Dendritic cell treated with granulocyte-macrophage colony-stimulating factor and Interleukin-4, amounts not matched to agents 40 ng/mL and 50 ng/mL, for 4 days (primary cell): ENCODE measurements at regions of chr21 and their contacts with region 1.

Region 1: DNA sequence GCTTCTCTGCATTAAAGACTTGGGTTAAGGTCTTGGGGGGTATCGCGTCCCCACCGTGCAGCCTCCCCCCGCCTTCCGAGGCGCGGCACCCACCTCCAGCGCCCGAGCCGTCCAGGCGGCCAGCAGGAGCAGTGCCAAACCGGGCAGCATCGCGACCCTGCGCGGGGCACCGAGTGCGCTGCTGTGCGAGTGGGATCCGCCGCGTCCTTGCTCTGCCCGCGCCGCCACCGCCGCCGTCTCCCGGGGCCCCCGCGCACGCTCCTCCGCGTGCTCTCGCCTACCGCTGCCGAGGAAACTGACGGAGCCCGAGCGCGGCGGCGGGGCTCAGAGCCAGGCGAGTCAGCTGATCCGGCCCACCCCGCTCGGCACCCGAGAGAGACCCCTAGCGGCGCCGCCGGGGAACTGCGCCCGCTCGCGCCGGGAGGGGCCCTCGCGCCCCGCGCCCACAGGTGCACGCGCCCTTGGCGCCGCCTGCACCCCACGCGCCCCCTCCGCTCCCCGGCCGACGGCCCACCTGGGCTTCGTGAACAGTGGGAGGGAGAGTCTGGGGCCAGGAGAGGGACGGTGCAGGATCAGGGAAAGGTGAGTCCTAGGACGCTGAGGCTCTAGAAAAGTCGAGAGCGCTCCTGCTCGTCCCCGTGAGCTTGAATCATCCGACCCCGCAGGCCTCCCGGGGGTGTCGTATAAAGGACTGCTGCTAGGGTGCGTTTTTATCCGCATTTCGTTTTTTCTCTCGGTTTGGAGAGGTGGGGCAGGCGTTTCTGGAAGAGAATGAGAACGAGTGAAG is at the start of gene APP:
- H3K4me3 Mint-ChIP-seq: peak within 1 kb of the TSS; percentile 92
- H3K27ac Mint-ChIP-seq: peak within 1 kb of the TSS; percentile 86
- H3K4me1 Mint-ChIP-seq: peaks cover 42% of the 10 kb centered on the region
- H3K27me3 Mint-ChIP-seq: peaks cover 14% of the 10 kb centered on the region

Region 2: GRCh38 chr21:25734904-25735645 is 435.6 kb before region 1 on chr21 and contains the starts of genes ATP5PF and GABPA:
- intact Hi-C with region 1: loop called (anchors 10 kb)
- H3K4me3 Mint-ChIP-seq: peak within 1 kb of the TSS; percentile 96
- H3K27ac Mint-ChIP-seq: peak within 1 kb of the TSS; percentile 100
- H3K4me1 Mint-ChIP-seq: peaks cover 35% of the 10 kb centered on the region
- H3K27me3 Mint-ChIP-seq: no peaks in the 10 kb centered on the region

Region 3: GRCh38 chr21:25871566-25871965 is 299.1 kb before region 1 on chr21:
- intact Hi-C with region 1: no loop called
- H3K4me3 Mint-ChIP-seq: no peak overlapping the region
- H3K27ac Mint-ChIP-seq: no peak overlapping the region
- H3K4me1 Mint-ChIP-seq: peaks cover 8% of the 10 kb centered on the region
- H3K27me3 Mint-ChIP-seq: no peaks in the 10 kb centered on the region

Region 4: DNA sequence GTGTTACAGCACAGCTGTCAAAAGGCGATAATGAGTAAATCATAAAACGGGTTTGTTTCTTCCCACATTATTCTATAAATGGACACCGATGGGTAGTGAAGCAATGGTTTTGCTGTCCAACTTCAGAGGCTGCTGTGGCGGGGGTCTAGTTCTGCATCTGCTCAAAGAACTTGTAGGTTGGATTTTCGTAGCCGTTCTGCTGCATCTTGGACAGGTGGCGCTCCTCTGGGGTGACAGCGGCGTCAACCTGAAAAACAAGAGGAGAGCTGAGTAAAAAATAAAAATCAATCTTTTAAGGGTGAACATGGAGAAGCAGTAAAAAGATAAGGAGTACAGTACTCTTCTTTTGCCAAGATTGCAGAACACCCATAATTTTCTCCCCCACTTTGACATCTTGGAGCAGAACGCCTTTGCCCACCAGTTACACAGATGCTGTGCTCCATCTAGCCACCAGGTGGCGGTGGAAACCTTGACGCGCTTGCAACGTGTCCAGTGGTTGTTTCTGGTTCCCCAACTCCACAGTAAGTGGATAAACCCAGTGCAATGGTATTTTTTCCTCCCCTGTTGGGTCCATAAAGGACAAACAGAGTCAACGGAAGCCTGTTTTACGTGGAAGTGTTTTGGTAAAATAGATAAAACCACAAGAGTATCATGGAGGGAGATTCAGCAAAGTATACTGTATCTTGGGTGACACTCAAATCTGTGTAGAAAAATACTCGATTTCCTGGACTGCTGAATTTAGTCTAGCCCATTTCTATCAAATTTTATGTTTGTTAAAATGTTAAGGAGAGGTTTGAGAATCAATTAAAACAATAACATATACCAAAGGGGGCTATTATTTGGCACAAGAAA is 288.9 kb before region 1 on chr21:
- intact Hi-C with region 1: loop called (anchors 2 kb)
- H3K4me3 Mint-ChIP-seq: no peak overlapping the region
- H3K27ac Mint-ChIP-seq: no peak overlapping the region
- H3K4me1 Mint-ChIP-seq: no peaks in the 10 kb centered on the region
- H3K27me3 Mint-ChIP-seq: no peaks in the 10 kb centered on the region

Region 5: GRCh38 chr21:25895565-25896205 is 275.0 kb before region 1 on chr21:
- intact Hi-C with region 1: loop called (anchors 5 kb)
- H3K4me3 Mint-ChIP-seq: no peak overlapping the region
- H3K27ac Mint-ChIP-seq: no peak overlapping the region
- H3K4me1 Mint-ChIP-seq: peaks cover 6% of the 10 kb centered on the region
- H3K27me3 Mint-ChIP-seq: no peaks in the 10 kb centered on the region